Vagina (tissue), 2 donors: ENCODE measurements at regions of chr9 and their contacts with region 1.

Region 1: GRCh38 chr9:120394058-120394669 is 185.8 kb downstream of the CDK5RAP2 start:
- DNase-seq: no peak
- H3K4me3 ChIP-seq: no peak overlapping the region
- H3K27ac ChIP-seq: no peak overlapping the region
- H3K4me1 ChIP-seq: no peaks in the 10 kb centered on the region
- H3K27me3 ChIP-seq: no peaks in the 10 kb centered on the region
- CTCF ChIP-seq: no peak
- POLR2A ChIP-seq: no peak

Region 2: GRCh38 chr9:119827126-119827525 is 567.0 kb before region 1 on chr9:
- intact Hi-C with region 1: loop called (anchors 10 kb)
- DNase-seq: no peak
- H3K4me3 ChIP-seq: no peak overlapping the region
- H3K27ac ChIP-seq: no peak overlapping the region
- H3K4me1 ChIP-seq: no peaks in the 10 kb centered on the region
- H3K27me3 ChIP-seq: no peaks in the 10 kb centered on the region
- CTCF ChIP-seq: no peak
- POLR2A ChIP-seq: no peak